ENCODE measurements at regions of chr1 and their contacts with region 1.

Region 1: GRCh38 chr1:41812051-41812450 is 106.7 kb downstream of the HIVEP3 start:
- DNase-seq: peak in 1 of 5 donors; percentile 20
- H3K4me3 ChIP-seq: no peak overlapping the region
- H3K27ac ChIP-seq: no peak overlapping the region
- H3K4me1 ChIP-seq: no peaks in the 10 kb centered on the region
- H3K27me3 ChIP-seq: no peaks in the 10 kb centered on the region
- CTCF ChIP-seq: no peak
- EP300 ChIP-seq: no peak
- POLR2A ChIP-seq: no peak

Region 2: DNA sequence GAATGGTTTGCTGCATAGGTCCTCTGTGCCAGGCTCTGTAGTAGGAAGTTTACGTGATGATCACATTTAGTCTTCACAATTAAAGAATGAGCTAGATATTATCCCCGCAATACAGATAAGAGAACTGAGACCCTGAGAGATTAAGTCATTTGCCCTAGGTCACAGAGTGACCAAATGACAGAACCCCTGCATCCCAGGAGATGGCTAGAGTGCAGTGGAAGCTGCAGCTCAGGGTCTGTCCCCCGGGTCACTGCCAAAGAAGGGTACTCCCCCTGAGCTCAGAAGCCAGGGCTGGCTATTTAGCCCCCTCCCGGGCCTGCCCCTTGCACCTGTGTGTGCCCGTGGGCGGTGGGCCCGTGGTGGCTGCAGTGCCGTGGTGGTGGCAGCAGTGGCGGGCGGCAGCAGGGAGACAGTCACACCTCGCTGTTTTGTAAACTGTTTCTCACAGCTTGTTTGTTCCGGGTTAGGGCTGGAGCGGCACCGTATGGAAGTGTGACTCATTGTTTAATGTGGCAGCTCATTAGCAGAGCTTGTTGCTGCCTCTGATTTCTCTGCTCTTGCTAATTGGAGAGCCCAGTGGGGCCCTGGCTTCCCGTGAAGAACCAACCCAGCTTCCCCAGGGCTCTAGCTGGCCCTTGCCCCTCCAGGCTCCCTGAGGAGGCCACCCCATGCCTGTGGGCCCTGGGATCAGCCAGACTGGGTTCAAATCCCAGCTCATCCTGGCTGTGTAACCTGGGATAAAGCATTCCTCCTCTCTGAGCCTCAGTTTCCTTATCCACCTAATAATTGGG is 470.1 kb before region 1 on chr1:
- intact Hi-C with region 1: no loop called
- DNase-seq: peak in 1 of 5 donors; percentile 1
- H3K4me3 ChIP-seq: no peak overlapping the region
- H3K27ac ChIP-seq: no peak overlapping the region
- H3K4me1 ChIP-seq: no peaks in the 10 kb centered on the region
- H3K27me3 ChIP-seq: no peaks in the 10 kb centered on the region
- CTCF ChIP-seq: no peak
- EP300 ChIP-seq: no peak
- POLR2A ChIP-seq: no peak

Region 3: GRCh38 chr1:41751804-41752513 is 60.1 kb before region 1 on chr1:
- intact Hi-C with region 1: loop called in 1 of 4 experiments (anchors 1 kb)
- DNase-seq: no peak
- H3K4me3 ChIP-seq: no peak overlapping the region
- H3K27ac ChIP-seq: no peak overlapping the region
- H3K4me1 ChIP-seq: no peaks in the 10 kb centered on the region
- H3K27me3 ChIP-seq: no peaks in the 10 kb centered on the region
- CTCF ChIP-seq: no peak
- EP300 ChIP-seq: no peak
- POLR2A ChIP-seq: no peak

Region 4: GRCh38 chr1:41862384-41863174 is 50.5 kb after region 1 on chr1:
- intact Hi-C with region 1: no loop called
- DNase-seq: no peak
- H3K4me3 ChIP-seq: no peak overlapping the region
- H3K27ac ChIP-seq: no peak overlapping the region
- H3K4me1 ChIP-seq: peaks cover 11% of the 10 kb centered on the region
- H3K27me3 ChIP-seq: no peaks in the 10 kb centered on the region
- CTCF ChIP-seq: no peak
- EP300 ChIP-seq: no peak
- POLR2A ChIP-seq: no peak

Measured in ovary (tissue), 10 donors.